ENCODE measurements at regions of chr13 and their contacts with region 1.

Region 1: DNA sequence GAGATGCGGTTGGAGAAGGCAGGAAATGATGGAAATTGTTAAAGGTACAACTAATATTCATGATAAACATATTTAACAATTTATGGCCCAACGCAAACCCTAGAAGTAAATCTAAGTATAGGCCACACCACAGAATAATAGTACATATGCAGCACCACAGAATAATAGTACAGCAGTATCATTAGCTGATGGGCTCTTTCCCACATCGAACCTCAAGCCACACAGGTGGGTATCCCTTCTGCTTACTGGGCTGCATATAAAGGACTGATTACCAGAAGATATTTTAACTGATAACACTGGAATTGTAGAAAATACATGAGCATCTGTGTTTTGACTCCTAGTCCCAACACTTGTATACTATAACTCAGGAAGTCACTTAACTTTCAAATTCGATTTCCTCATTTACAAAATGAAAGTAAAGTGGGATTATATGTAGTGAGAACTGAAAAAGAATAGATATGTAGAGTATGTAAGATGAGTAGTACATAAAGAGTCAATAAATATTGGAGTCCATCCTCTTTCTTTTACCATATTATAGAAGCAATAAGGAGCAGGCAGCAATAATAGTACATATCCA is 91.5 kb downstream of the TSC22D1 start:
- DNase-seq: no peak
- H3K4me3 ChIP-seq: no peak overlapping the region
- H3K27ac ChIP-seq: no peak overlapping the region
- H3K27me3 ChIP-seq: no peaks in the 10 kb centered on the region
- CTCF ChIP-seq: no peak

Region 2: GRCh38 chr13:43567608-43568007 is 917.0 kb before region 1 on chr13:
- CTCF ChIA-PET with region 1: no interaction called
- POLR2A ChIA-PET with region 1: no interaction called
- DNase-seq: no peak
- H3K4me3 ChIP-seq: no peak overlapping the region
- H3K27ac ChIP-seq: no peak overlapping the region
- H3K27me3 ChIP-seq: no peaks in the 10 kb centered on the region
- CTCF ChIP-seq: no peak

Region 3: DNA sequence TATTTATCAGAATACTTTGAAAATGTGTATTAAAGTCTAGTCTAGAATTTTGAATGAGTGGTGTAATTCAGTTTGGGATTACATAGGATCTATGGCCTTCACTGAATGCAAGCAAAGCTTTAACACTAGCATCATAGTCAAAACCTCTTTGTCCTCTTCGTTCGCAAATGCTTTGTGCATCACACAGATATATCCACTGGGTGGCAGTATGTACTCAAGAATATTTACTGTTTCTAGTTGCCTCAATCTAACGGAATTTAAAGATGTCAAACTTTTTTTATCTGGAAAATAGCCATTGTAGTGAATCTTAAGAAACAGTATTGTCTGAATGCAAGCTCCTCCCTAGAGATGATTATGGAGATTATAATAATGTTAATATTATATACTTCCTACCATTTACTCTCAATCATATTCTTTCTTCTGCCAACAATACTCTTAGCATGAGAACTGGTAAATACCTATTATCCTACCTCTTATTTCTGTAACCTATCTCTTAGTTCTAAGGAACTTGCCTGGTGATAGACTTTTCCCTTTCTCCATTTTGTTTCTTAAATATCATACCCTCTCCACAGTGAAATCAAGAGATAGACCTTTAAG is 579.1 kb before region 1 on chr13:
- CTCF ChIA-PET with region 1: interaction called, 11 read pairs
- POLR2A ChIA-PET with region 1: no interaction called
- DNase-seq: peak; percentile 48
- H3K4me3 ChIP-seq: no peak overlapping the region
- H3K27ac ChIP-seq: no peak overlapping the region
- H3K27me3 ChIP-seq: no peaks in the 10 kb centered on the region
- CTCF ChIP-seq: peak; percentile 68

Region 4: GRCh38 chr13:44498969-44499368 is 14.3 kb after region 1 on chr13:
- CTCF ChIA-PET with region 1: interaction called, 15 read pairs
- POLR2A ChIA-PET with region 1: no interaction called
- DNase-seq: no peak
- H3K4me3 ChIP-seq: no peak overlapping the region
- H3K27ac ChIP-seq: no peak overlapping the region
- H3K27me3 ChIP-seq: no peaks in the 10 kb centered on the region
- CTCF ChIP-seq: no peak

Region 5: GRCh38 chr13:44879463-44880058 is 394.9 kb after region 1 on chr13:
- CTCF ChIA-PET with region 1: interaction called, 12 read pairs
- POLR2A ChIA-PET with region 1: no interaction called
- DNase-seq: no peak
- H3K4me3 ChIP-seq: no peak overlapping the region
- H3K27ac ChIP-seq: no peak overlapping the region
- H3K27me3 ChIP-seq: no peaks in the 10 kb centered on the region
- CTCF ChIP-seq: peak; percentile 43

Region 6: DNA sequence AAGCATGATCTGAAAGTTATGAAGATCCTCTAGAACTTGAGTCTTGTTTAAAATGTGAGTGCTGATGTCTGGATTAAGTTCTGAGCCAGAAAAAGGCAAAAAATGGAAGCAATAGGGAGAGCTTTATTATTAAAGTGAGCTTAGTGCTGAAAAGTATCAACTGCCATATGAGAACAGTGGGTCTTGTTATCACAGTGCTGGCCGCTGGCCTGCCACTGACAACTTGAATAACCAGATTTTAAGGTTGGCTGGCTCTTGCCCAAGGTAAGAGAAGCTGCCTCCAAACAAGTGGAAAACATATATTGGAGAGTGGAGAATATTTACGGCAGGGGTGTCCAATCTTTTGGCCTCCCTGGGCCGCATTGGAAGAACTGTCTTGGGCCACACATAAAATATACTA is 470.8 kb after region 1 on chr13:
- CTCF ChIA-PET with region 1: interaction called, 16 read pairs
- POLR2A ChIA-PET with region 1: no interaction called
- DNase-seq: no peak
- H3K4me3 ChIP-seq: no peak overlapping the region
- H3K27ac ChIP-seq: no peak overlapping the region
- H3K27me3 ChIP-seq: no peaks in the 10 kb centered on the region
- CTCF ChIP-seq: no peak